A549 (cell line): ENCODE measurements at regions of chrX and their contacts with region 1.

Region 1: DNA sequence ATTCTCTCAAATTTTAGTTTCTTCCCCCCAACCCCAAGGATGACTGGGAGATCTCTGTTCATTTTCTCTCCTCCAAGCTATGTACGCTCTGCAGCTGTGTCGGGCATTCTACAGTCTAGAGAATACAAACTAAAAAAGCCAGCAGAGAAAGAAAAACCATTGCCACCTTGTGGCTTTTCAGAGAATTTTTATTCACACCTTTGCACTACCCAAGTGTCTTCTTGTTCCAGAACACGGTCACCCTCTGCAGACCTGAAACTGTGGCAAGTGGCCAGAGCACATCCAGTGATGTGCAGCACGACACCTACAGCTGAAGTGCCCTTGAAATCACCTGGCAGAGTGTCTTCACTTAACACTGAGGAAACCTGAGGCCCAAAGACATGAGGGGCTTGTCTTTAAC is 68.6 kb downstream of the CHST7 start:
- DNase-seq: peak; percentile 7 to 28
- ATAC-seq: peak; percentile 66 to 82; a peak in 5 of 6 replicates
- H3K4me3 ChIP-seq: no peak overlapping the region
- H3K27ac ChIP-seq: no peak overlapping the region
- H3K4me1 ChIP-seq: peaks cover 12% of the 10 kb centered on the region
- CTCF ChIP-seq: peak; percentile 46
- EP300 ChIP-seq: no peak
- POLR2A ChIP-seq: no peak
- RAD21 ChIP-seq: peak; percentile 49 to 57

Region 2: GRCh38 chrX:46543441-46543840 is 98.7 kb before region 1 on chrX:
- CTCF ChIA-PET with region 1: no interaction called
- POLR2A ChIA-PET with region 1: no interaction called
- DNase-seq: no peak
- ATAC-seq: no peak
- H3K4me3 ChIP-seq: no peak overlapping the region
- H3K27ac ChIP-seq: no peak overlapping the region
- H3K4me1 ChIP-seq: peaks cover 27% of the 10 kb centered on the region
- CTCF ChIP-seq: no peak
- EP300 ChIP-seq: no peak
- POLR2A ChIP-seq: no peak
- RAD21 ChIP-seq: no peak

Region 3: DNA sequence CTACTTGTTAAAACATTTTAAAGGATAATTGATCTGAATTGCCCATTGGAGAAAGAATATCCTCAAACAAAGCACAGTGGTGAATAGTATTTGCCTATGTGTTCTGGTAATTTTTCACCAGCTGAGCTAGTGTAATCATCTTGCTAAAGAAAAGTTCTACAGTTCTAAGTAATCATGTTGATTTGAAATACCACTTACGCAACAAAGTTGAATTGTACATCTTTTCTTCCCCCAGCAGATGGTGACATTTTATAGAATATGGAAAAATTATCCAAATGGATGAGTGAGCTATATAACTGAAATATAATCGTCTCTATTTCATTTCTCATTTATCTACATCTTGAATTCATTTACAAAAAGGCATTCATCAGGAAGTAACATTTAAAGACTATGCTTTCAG is 87.2 kb before region 1 on chrX:
- CTCF ChIA-PET with region 1: interaction called, 19 read pairs
- POLR2A ChIA-PET with region 1: interaction called, 4 read pairs
- DNase-seq: peak in 1 of 2 experiments; percentile 36
- ATAC-seq: peak in 1 of 2 experiments; percentile 51; a peak in 1 of 6 replicates
- H3K4me3 ChIP-seq: no peak overlapping the region
- H3K27ac ChIP-seq: peak overlapping the region in 1 of 2 experiments; percentile 33; a peak in 1 of 6 replicates
- H3K4me1 ChIP-seq: peaks cover 11% of the 10 kb centered on the region
- CTCF ChIP-seq: peak; percentile 58
- EP300 ChIP-seq: no peak
- POLR2A ChIP-seq: no peak
- RAD21 ChIP-seq: peak; percentile 69 to 75

Region 4: GRCh38 chrX:46812445-46812844 is 170.3 kb after region 1 on chrX:
- CTCF ChIA-PET with region 1: no interaction called
- POLR2A ChIA-PET with region 1: no interaction called
- DNase-seq: peak; percentile 21 to 75
- ATAC-seq: peak; percentile 82 to 95
- H3K4me3 ChIP-seq: no peak overlapping the region
- H3K27ac ChIP-seq: peak overlapping the region; percentile 62 to 74
- H3K4me1 ChIP-seq: peaks cover 23% of the 10 kb centered on the region
- CTCF ChIP-seq: no peak
- EP300 ChIP-seq: no peak
- POLR2A ChIP-seq: no peak
- RAD21 ChIP-seq: no peak